ENCODE measurements at regions of chr19 and their contacts with region 1.

Region 1: DNA sequence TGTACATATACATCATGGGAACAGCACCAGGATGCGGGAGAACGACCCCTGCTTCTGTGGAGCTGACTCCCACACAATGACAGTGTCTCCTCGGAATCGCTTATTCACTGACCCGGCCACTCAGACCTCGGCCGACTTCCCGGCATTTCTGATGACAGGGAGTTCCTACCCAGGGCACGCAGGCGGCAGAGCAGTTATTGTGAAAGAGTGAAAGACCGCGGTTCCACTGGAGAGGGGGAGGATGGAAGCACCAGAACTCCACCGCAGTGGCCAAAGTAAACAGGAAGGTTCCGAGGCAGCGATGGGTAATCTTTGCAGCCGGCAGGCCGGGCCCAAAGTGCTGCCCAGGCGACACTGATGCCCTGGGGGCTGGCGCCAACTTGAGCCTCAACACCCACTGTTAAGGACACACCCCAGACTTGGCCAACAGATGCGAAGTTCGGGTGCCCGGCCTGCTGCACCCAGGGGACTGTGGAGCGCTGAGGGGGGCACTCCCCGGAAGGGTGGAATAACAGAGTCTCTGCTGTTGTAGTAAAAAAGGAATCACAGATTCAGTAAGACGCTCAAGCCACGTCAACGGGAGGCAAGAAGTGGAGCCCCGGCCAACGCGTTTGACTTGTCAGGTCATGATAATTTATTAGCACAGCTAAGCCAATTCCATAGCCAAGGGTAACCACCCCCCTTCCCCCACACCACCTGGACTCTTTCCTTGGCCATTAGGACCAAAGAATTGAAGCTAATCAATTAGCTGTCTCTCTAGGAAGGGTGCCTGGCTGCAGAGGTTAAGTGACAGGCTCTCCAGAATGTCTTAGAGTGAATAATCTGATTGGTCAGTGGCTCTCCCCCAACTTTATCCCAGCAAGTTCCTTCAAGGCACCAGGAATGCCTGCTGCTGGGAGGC is 5.8 kb downstream of the MLLT1 start:
- DNase-seq: peak; percentile 79 to 98
- H3K4me3 ChIP-seq: peak overlapping the region; percentile 31 to 45
- H3K27ac ChIP-seq: peak overlapping the region; percentile 90 to 92
- H3K4me1 ChIP-seq: peaks cover 30 to 69% of the 10 kb centered on the region in 2 donors
- H3K27me3 ChIP-seq: no peaks in the 10 kb centered on the region
- CTCF ChIP-seq: no peak

Region 2: GRCh38 chr19:6199240-6199983 is 74.5 kb before region 1 on chr19:
- intact Hi-C with region 1: loop called (anchors 5 kb)
- DNase-seq: peak; percentile 95 to 99
- H3K4me3 ChIP-seq: peak overlapping the region; percentile 70 to 78
- H3K27ac ChIP-seq: no peak overlapping the region
- H3K4me1 ChIP-seq: peaks cover 0 to 9% of the 10 kb centered on the region in 2 donors
- H3K27me3 ChIP-seq: no peaks in the 10 kb centered on the region
- CTCF ChIP-seq: peak in 2 of 3 experiments; percentile 38 to 68

Region 3: DNA sequence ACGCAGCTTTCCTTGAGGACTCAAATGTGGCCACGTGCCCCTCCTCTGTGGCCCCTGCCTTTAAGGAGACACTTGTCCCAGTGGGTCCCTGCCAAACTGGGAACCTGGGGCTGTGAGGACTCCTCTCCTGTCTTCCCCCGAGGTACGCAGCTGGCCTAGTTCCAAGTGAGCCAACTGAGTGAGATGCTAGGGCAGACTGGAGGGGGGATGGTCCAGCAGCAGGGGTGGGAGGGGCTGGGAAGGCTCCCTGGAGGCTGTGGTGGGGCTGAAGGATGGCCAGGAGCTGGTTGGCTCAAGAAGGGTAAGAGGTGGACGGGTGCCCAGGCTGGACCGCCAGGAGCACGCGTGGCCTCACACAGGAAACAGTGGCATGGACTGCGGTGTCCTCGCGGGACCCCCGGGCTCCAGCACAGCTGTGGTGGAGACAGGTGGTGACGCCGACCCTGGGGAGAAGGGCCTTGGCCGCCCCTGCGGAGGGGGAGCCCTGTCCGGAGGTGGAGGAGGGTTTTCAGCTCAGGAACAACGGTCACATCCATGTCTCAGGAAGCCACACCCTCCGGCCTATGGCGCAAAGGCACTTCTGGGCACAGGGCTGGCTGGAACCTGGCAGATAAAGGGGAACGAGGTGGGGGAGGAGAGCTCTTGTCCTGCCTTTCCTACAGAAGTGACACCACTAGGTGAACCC is 40.0 kb before region 1 on chr19:
- intact Hi-C with region 1: loop called (anchors 2 kb)
- DNase-seq: no peak
- H3K4me3 ChIP-seq: peak overlapping the region; percentile 8 to 15
- H3K27ac ChIP-seq: peak overlapping the region; percentile 24 to 55
- H3K4me1 ChIP-seq: peaks cover 18 to 42% of the 10 kb centered on the region in 2 donors
- H3K27me3 ChIP-seq: no peaks in the 10 kb centered on the region
- CTCF ChIP-seq: no peak

Region 4: GRCh38 chr19:6602729-6603114 is 328.8 kb after region 1 on chr19:
- intact Hi-C with region 1: no loop called
- DNase-seq: no peak
- H3K4me3 ChIP-seq: no peak overlapping the region
- H3K27ac ChIP-seq: no peak overlapping the region
- H3K4me1 ChIP-seq: no peaks in the 10 kb centered on the region
- H3K27me3 ChIP-seq: no peaks in the 10 kb centered on the region
- CTCF ChIP-seq: no peak

Region 5: DNA sequence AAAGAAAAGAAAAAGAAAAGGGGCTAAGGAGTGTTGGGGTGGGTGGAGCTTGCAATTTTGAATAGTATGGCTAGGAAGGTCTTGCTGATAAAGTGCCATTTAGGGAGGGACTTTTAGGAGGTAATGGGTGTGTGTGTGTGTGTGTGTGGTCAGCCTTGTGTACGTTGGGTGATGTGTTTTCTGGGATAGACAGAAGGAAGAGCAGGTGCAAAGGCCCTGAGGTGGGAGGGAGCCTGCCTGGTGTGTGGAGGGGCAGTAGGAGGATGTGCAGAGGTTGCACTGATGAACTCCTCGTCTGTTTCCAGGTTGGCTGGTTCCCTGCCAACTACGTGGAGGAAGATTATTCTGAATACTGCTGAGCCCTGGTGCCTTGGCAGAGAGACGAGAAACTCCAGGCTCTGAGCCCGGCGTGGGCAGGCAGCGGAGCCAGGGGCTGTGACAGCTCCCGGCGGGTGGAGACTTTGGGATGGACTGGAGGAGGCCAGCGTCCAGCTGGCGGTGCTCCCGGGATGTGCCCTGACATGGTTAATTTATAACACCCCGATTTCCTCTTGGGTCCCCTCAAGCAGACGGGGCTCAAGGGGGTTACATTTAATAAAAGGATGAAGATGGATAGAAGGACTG is 582.9 kb after region 1 on chr19:
- intact Hi-C with region 1: no loop called
- DNase-seq: no peak
- H3K4me3 ChIP-seq: no peak overlapping the region
- H3K27ac ChIP-seq: no peak overlapping the region
- H3K4me1 ChIP-seq: no peaks in the 10 kb centered on the region
- H3K27me3 ChIP-seq: no peaks in the 10 kb centered on the region
- CTCF ChIP-seq: no peak